PC-9 (cell line): ENCODE measurements at regions of chr10 and their contacts with region 1.

Region 1: GRCh38 chr10:33330543-33331378 is 3.7 kb downstream of the NRP1 start:
- DNase-seq: peak; percentile 54 to 79
- H3K4me3 ChIP-seq: peak overlapping the region; percentile 92
- H3K27ac ChIP-seq: peak overlapping the region; percentile 28; the same call in 1 of the 2 replicates
- H3K4me1 ChIP-seq: peaks cover 55% of the 10 kb centered on the region
- H3K27me3 ChIP-seq: no peaks in the 10 kb centered on the region
- CTCF ChIP-seq: peak; percentile 80

Region 2: GRCh38 chr10:33193057-33193700 is 137.6 kb before region 1 on chr10:
- CTCF ChIA-PET with region 1: interaction called, 21 read pairs
- POLR2A ChIA-PET with region 1: no interaction called
- intact Hi-C with region 1: loop called (anchors 1 kb)
- DNase-seq: peak; percentile 35 to 75
- H3K4me3 ChIP-seq: no peak overlapping the region
- H3K27ac ChIP-seq: no peak overlapping the region
- H3K4me1 ChIP-seq: no peaks in the 10 kb centered on the region
- H3K27me3 ChIP-seq: no peaks in the 10 kb centered on the region
- CTCF ChIP-seq: peak; percentile 66

Region 3: DNA sequence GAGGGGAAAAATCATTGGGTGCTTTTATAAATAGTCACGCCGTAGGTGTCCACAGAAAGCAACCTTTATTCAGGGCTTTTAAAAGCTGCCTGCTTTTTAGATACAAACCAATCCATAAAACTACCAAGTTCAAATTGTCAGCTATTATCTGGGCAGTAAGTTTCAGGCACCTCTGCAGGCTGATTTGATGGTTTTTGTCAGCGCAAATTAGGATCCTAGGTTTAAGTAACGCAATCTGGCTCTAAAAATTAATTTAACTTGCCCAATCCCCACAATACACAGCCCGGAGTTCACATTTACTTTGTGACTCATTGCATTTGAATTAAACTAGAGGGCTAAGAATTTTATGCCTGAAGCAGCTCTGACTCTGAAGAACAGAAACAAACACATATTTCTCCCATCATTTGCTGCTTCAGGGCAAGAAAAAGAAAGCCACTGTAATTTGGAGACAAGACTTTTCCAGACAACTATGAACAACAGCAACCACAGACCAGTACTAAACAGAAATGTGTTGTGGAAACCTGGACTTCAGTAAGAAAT is 39.6 kb before region 1 on chr10:
- CTCF ChIA-PET with region 1: no interaction called
- POLR2A ChIA-PET with region 1: no interaction called
- intact Hi-C with region 1: loop called (anchors 2 kb)
- DNase-seq: peak; percentile 37 to 91
- H3K4me3 ChIP-seq: peak overlapping the region; percentile 31; the same call in 1 of the 2 replicates
- H3K27ac ChIP-seq: peak overlapping the region; percentile 99
- H3K4me1 ChIP-seq: peaks cover 48% of the 10 kb centered on the region
- H3K27me3 ChIP-seq: no peaks in the 10 kb centered on the region
- CTCF ChIP-seq: no peak

Region 4: GRCh38 chr10:33661580-33662336 is 331.0 kb after region 1 on chr10:
- CTCF ChIA-PET with region 1: no interaction called
- POLR2A ChIA-PET with region 1: no interaction called
- intact Hi-C with region 1: loop called (anchors 2 kb)
- DNase-seq: peak; percentile 73 to 90
- H3K4me3 ChIP-seq: no peak overlapping the region
- H3K27ac ChIP-seq: no peak overlapping the region
- H3K4me1 ChIP-seq: peaks cover 10% of the 10 kb centered on the region
- H3K27me3 ChIP-seq: no peaks in the 10 kb centered on the region
- CTCF ChIP-seq: no peak

Region 5: DNA sequence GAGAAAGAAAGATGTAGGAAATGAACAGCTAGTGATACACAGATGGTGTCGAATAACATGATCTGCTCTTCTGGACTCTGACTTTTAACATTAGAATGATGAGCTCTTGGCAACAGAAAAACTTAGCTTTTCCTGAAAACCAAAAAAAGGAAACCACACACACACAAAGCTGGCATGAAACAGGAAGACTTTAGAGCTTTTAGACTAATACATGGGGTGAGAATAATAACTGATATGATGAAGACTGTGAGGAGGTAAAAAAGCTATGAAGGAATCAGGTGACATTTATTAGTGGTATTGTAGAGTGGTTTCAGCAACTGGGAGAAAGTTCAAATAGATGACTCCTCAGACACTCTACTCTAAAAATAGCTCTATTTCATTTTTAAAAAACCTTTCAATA is 992.4 kb after region 1 on chr10:
- CTCF ChIA-PET with region 1: no interaction called
- POLR2A ChIA-PET with region 1: interaction called, 3 read pairs
- intact Hi-C with region 1: loop called (anchors 10 kb)
- DNase-seq: no peak
- H3K4me3 ChIP-seq: no peak overlapping the region
- H3K27ac ChIP-seq: peak overlapping the region; percentile 37; the same call in 1 of the 2 replicates
- H3K4me1 ChIP-seq: peaks cover 38% of the 10 kb centered on the region
- H3K27me3 ChIP-seq: no peaks in the 10 kb centered on the region
- CTCF ChIP-seq: no peak